H1 (cell line): ENCODE measurements at regions of chr16 and their contacts with region 1.

Region 1: GRCh38 chr16:27242868-27243590 is 25.5 kb downstream of the NSMCE1 start:
- DNase-seq: no peak
- H3K4me3 ChIP-seq: no peak overlapping the region
- H3K27ac ChIP-seq: no peak overlapping the region
- H3K4me1 ChIP-seq: peaks cover 0 to 6% (median 3%) of the 10 kb centered on the region in 4 experiments; a peak in 3 of 7 replicates
- H3K27me3 ChIP-seq: no peaks in the 10 kb centered on the region
- CTCF ChIP-seq: no peak
- EP300 ChIP-seq: no peak
- POLR2A ChIP-seq: no peak
- RAD21 ChIP-seq: no peak

Region 2: DNA sequence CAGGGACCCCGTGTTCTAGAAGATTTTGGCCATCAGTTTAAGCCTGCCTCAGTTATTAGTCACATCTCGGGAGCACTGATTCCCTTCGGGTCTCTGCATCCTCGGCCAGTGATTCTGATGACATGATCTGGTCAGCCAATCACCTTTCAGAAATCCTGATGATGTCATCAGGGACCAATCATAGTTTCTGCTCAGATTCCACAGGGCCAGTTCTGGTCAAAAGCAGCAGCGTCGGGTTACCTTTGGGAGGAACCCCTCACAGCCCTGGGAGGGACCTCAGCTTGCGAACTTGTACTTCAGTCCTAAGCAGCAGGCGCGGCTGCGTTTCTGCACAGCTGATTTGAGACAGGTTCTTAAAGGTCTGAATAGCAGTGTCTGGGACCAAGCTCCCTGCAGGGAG is 25.8 kb before region 1 on chr16:
- CTCF ChIA-PET with region 1: no interaction called
- POLR2A ChIA-PET with region 1: no interaction called
- DNase-seq: no peak
- H3K4me3 ChIP-seq: no peak overlapping the region
- H3K27ac ChIP-seq: no peak overlapping the region
- H3K4me1 ChIP-seq: no peaks in the 10 kb centered on the region
- H3K27me3 ChIP-seq: no peaks in the 10 kb centered on the region
- CTCF ChIP-seq: no peak
- EP300 ChIP-seq: no peak
- POLR2A ChIP-seq: no peak
- RAD21 ChIP-seq: no peak

Region 3: DNA sequence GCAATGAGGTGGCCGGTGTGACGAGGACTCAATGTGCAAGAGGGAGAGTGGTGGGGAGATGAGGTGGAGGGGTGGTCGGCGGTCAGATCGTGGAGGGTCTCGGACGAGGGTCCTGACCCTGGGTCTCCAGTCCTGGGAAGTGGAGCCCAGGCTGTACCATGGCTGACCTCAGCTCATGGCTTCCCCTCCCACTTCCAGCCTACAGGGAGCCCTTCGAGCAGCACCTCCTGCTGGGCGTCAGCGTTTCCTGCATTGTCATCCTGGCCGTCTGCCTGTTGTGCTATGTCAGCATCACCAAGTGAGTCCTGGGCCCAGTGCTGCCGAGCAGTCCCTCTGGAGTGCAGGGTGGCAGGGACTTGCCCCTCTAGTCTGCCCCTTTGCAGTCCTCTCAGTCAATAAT is 112.6 kb after region 1 on chr16:
- CTCF ChIA-PET with region 1: interaction called, 55 read pairs
- POLR2A ChIA-PET with region 1: no interaction called
- DNase-seq: peak; percentile 41 to 83
- H3K4me3 ChIP-seq: no peak overlapping the region
- H3K27ac ChIP-seq: no peak overlapping the region
- H3K4me1 ChIP-seq: 0 out of 7 replicates have a peak, but pooled peaks cover 0 to 2% (median 0%) of the 10 kb centered on the region in 4 experiments
- H3K27me3 ChIP-seq: no peaks in the 10 kb centered on the region
- CTCF ChIP-seq: peak; percentile 68 to 74 (median 74)
- EP300 ChIP-seq: no peak
- POLR2A ChIP-seq: no peak
- RAD21 ChIP-seq: peak; percentile 54 to 72